Astrocyte of the cerebellum (primary cell): ENCODE measurements at regions of chr12 and their contacts with region 1.

Region 1: GRCh38 chr12:50971946-50972345 is 19.6 kb downstream of the HIGD1C start:
- DNase-seq: no peak
- H3K4me3 ChIP-seq: no peak overlapping the region
- CTCF ChIP-seq: no peak

Region 2: DNA sequence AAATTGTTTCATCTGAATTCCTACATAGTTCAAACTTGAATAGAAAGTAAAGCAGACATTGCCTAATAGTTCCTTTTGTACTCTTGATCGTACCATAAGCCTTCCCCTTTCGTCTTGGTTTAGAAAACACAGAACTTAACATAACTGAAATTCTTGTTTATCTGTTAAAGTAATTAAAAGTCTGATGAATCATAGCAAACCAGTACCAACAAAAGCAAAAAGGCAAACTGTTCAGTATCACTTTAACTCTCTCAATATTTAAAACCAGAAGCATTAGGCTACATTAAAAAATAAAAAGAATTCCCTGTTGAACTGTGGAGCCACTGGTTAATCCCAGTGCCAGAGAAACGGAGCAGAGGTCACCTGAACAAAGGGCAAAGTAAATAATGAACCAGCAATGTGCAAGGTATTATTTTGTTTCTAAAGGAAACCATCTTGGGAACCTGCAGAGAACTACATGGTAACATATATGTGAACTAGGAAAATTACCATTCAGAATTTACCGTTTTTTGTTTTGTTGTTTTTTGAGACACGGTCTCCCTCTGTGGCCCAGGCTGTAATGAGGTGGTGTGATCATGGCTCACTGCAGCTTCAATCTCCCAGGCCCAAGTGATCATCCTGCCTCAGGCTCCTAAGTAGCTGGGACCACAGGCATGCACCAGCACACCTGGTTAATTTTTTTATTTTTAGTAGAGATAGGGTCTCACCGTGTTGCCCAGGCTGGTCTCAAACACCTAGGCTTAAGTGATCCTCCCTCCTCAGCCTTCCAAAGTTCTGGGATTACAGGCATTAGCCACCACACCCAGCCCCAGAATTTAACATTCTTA is 36.8 kb before region 1 on chr12:
- in situ Hi-C with region 1: loop called (anchors 5 kb)
- DNase-seq: peak; percentile 28
- H3K4me3 ChIP-seq: no peak overlapping the region
- CTCF ChIP-seq: no peak

Region 3: GRCh38 chr12:51020448-51021182 is 48.7 kb after region 1 on chr12:
- in situ Hi-C with region 1: loop called (anchors 5 kb)
- DNase-seq: no peak
- H3K4me3 ChIP-seq: no peak overlapping the region
- CTCF ChIP-seq: no peak

Region 4: DNA sequence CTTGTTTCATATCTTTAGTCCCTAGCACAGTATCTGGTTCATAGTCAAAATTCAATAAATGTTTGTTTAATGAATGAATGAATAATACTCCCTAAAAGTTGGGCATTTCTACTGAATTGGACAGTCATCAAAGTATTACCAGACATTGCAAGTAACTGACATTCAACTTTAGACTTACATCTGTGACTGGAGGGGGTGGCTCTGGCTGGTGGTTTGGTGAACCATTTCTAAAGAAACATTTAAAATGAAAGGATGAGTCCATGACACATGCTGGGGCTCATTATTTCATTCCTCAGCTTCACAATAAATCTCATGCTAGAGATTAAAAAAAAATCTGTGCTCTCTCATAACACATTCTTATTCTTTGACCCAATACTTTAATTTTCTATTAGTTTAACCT is 132.0 kb after region 1 on chr12:
- in situ Hi-C with region 1: no loop called
- DNase-seq: no peak
- H3K4me3 ChIP-seq: no peak overlapping the region
- CTCF ChIP-seq: no peak